Activated naive CD4-positive, alpha-beta T cell treated with anti-CD3 and anti-CD28 coated beads for 36 hours (primary cell): ENCODE measurements at regions of chr4 and their contacts with region 1.

Region 1: DNA sequence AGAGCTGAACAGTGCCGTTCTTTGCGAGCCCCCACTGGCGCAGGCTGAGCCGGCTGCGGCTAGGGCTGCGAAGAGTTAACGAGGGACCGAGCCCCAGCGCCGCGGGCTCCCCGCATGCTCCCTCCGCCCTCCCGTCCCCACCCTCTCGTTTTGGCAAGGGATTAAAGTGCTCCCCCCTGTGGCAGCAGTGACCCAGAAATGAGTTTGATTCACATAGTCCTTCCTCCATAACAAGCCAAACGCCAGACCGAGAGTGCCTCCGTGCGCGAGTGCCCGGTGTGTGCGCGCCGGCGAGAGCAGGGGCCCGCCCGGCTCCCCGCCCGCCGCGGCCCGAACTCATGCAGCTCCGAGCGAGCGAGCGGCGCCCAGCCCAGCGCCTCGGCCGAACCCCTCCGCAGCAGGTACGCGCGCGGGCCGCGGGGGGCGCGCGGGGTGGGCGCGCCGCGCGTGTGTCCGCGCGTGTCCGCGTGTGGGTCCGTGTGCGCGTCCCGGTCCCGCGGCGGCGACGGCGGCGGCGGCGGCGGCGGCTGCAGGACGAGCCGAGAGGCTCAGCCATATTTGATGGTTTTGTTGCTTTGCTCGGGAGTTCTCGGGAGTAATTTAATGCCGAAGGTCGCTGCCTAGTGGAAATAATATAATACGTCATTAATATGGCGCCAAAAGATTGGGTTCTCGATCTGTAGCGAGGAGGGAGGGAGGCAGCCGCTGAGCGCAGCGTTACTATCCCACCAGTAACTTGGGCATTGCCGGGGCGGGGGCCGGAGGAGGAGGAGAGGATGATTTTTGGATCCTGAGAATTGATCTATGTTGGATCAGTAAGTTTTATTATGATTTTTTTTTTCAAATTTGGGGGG is at the start of gene JADE1:
- DNase-seq: peak; percentile 95
- H3K4me3 Mint-ChIP-seq: peak within 1 kb of the TSS; percentile 99
- H3K27ac Mint-ChIP-seq: peak within 1 kb of the TSS; percentile 100
- H3K4me1 Mint-ChIP-seq: peaks cover 15% of the 10 kb centered on the region
- H3K27me3 Mint-ChIP-seq: no peaks in the 10 kb centered on the region
- total RNA-seq, gene JADE1: 35.8 to 38.2 TPM

Region 2: DNA sequence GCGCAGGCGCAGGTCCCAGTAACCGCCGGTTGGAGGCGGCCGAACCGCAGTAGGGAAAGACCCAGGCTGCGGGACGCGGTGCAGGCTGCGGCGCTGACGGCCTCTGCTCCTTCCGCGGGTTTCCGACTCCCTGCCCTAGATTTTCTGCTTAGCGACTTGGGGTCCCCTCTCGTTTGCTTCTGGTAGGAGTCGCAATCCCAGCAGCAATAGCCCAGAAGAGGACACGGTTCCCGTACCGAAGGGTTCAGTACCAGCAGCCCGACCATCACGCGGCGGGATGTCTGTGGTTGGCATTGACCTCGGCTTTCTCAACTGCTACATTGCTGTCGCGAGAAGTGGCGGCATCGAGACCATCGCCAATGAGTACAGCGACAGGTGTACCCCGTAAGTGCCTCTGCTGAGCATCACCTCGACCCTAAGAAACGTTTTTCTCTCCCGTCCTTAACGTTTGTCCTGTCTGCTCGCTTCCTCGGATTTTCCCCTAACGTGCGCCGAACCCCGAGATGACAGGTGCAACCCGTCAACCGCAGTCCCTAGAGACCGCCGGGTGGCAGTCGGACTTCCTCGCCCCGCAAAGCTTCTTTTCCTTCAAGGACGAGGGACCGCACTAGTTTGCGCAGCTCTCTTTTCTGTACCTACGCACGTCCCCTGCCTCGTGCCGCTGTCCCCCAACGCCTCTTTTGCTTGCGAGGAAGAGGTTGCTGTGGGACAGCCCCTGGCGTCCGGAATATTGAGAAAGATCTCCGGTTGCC is 1027.3 kb before region 1 on chr4 and contains the start of gene HSPA4L:
- CTCF ChIA-PET with region 1: no interaction called
- intact Hi-C with region 1: loop called (anchors 5 kb)
- DNase-seq: peak; percentile 78
- H3K4me3 Mint-ChIP-seq: peak within 1 kb of the TSS; percentile 86
- H3K27ac Mint-ChIP-seq: peak within 1 kb of the TSS; percentile 80
- H3K4me1 Mint-ChIP-seq: peaks cover 17% of the 10 kb centered on the region
- H3K27me3 Mint-ChIP-seq: peaks cover 56% of the 10 kb centered on the region
- total RNA-seq, gene HSPA4L: 2.6 to 2.8 TPM

Region 3: GRCh38 chr4:127965062-127965802 is 844.5 kb before region 1 on chr4 and contains the starts of genes ABHD18 and MFSD8:
- CTCF ChIA-PET with region 1: no interaction called
- intact Hi-C with region 1: loop called (anchors 1 kb)
- DNase-seq: peak; percentile 99
- H3K4me3 Mint-ChIP-seq: peak within 1 kb of the TSS; percentile 93
- H3K27ac Mint-ChIP-seq: peak within 1 kb of the TSS; percentile 96
- H3K4me1 Mint-ChIP-seq: peaks cover 32% of the 10 kb centered on the region
- H3K27me3 Mint-ChIP-seq: no peaks in the 10 kb centered on the region
- total RNA-seq, gene ABHD18: 17.0 to 17.5 TPM
- total RNA-seq, gene MFSD8: 11.1 to 11.2 TPM

Region 4: GRCh38 chr4:128191115-128191781 is 618.5 kb before region 1 on chr4:
- CTCF ChIA-PET with region 1: no interaction called
- intact Hi-C with region 1: loop called (anchors 1 kb)
- DNase-seq: peak; percentile 84
- H3K4me3 Mint-ChIP-seq: no peak overlapping the region
- H3K27ac Mint-ChIP-seq: no peak overlapping the region
- H3K4me1 Mint-ChIP-seq: no peaks in the 10 kb centered on the region
- H3K27me3 Mint-ChIP-seq: no peaks in the 10 kb centered on the region

Region 5: DNA sequence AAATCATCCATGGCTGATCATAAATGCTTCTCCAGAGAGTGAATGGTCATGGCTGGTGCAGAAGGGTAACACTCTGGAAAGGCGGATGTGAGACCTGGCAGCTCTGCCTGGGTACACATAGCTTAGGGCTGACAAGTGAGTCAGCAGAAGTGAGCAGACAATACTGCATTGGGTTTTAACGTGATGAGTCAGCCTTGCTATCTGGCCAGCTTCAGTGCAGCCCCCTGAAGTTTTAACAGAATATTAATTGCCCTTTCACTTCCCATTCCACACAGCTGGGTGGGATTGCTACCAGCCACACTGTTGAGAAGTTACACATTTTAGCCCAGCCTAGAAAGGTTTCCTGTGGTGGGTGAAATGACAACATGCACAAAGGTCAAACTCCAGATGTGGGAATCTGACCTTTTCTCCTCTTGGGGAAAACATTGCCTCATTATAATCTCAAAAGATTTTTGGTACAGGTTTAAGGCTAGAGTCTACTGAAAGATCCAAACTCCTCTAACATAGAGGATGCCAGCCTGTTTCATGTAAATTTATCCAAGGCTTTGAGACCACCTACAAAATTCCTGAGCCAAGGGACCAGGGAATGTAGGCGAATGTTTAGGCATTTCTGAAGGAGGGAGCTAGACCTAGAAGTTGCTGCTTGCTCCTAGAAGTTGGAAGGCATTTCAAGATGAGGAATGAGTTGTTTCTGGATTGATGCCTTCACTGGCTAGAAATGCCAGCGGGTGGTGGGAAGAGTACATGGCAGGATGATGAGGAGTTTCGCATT is 291.8 kb before region 1 on chr4:
- CTCF ChIA-PET with region 1: interaction called, 3 read pairs
- intact Hi-C with region 1: loop called (anchors 1 kb)
- DNase-seq: peak; percentile 8
- H3K4me3 Mint-ChIP-seq: no peak overlapping the region
- H3K27ac Mint-ChIP-seq: no peak overlapping the region
- H3K4me1 Mint-ChIP-seq: peaks cover 12% of the 10 kb centered on the region
- H3K27me3 Mint-ChIP-seq: peaks cover 2% of the 10 kb centered on the region

Region 6: GRCh38 chr4:128574706-128575105 is 235.0 kb before region 1 on chr4:
- CTCF ChIA-PET with region 1: interaction called, 4 read pairs
- intact Hi-C with region 1: loop called (anchors 1 kb)
- DNase-seq: peak; percentile 91
- H3K4me3 Mint-ChIP-seq: no peak overlapping the region
- H3K27ac Mint-ChIP-seq: no peak overlapping the region
- H3K4me1 Mint-ChIP-seq: no peaks in the 10 kb centered on the region
- H3K27me3 Mint-ChIP-seq: peaks cover 6% of the 10 kb centered on the region

Region 7: GRCh38 chr4:128863312-128864075 is 53.8 kb after region 1 on chr4:
- CTCF ChIA-PET with region 1: interaction called, 12 read pairs
- intact Hi-C with region 1: loop called (anchors 1 kb)
- DNase-seq: peak; percentile 75
- H3K4me3 Mint-ChIP-seq: no peak overlapping the region
- H3K27ac Mint-ChIP-seq: peak overlapping the region; percentile 62
- H3K4me1 Mint-ChIP-seq: peaks cover 48% of the 10 kb centered on the region
- H3K27me3 Mint-ChIP-seq: no peaks in the 10 kb centered on the region

Region 8: GRCh38 chr4:129167640-129168260 is 358.0 kb after region 1 on chr4:
- CTCF ChIA-PET with region 1: no interaction called
- intact Hi-C with region 1: no loop called
- DNase-seq: no peak
- H3K4me3 Mint-ChIP-seq: no peak overlapping the region
- H3K27ac Mint-ChIP-seq: no peak overlapping the region
- H3K4me1 Mint-ChIP-seq: no peaks in the 10 kb centered on the region
- H3K27me3 Mint-ChIP-seq: peaks cover 17% of the 10 kb centered on the region